MCF 10A (cell line): ENCODE measurements at regions of chr1 and their contacts with region 1.

Region 1: DNA sequence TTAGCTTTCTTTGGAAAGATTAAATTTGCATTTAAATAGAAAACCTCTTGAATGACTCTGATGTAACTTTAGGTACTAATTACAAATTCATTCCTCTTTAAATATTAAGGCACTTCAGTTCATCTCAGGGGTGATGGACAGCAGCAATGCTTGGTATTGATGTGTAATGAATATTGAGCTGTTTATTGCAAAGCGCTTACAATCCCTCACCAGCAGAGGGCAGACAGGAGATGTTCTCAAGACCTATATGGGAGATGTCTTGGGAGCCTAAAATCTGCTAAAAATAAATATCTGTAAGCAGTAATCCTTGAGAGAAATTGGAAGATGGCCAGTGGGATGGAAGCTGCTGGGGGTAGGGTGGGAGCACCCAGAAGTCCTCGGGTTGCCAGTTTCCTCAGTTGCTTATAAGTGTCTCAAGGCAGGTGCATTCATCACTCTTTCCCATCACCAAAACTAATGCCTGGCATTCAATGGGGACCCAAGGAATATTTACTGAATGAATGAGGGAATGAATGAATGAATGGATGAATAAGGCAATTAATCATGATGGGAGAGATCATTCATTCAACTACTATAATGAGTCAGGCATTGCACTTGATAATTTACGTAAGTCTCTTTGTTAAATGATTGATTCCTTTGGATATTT is 2.3 kb downstream of the KLHDC8A start:
- DNase-seq: peak; percentile 92
- H3K4me3 Mint-ChIP-seq: no peak overlapping the region
- H3K27ac Mint-ChIP-seq: no peak overlapping the region
- H3K4me1 Mint-ChIP-seq: peaks cover 13% of the 10 kb centered on the region
- H3K27me3 Mint-ChIP-seq: peaks cover 23% of the 10 kb centered on the region
- CTCF ChIP-seq: peak; percentile 91

Region 2: GRCh38 chr1:205227584-205228006 is 126.8 kb before region 1 on chr1 and contains the start of gene TMCC2:
- CTCF ChIA-PET with region 1: interaction called, 10 read pairs
- POLR2A ChIA-PET with region 1: interaction called, 3 read pairs
- intact Hi-C with region 1: no loop called
- DNase-seq: peak; percentile 91
- H3K4me3 Mint-ChIP-seq: peak within 1 kb of the TSS; percentile 63
- H3K27ac Mint-ChIP-seq: no peak within 1 kb of the TSS
- H3K4me1 Mint-ChIP-seq: peaks cover 20% of the 10 kb centered on the region
- H3K27me3 Mint-ChIP-seq: no peaks in the 10 kb centered on the region
- CTCF ChIP-seq: no peak
- total RNA-seq, gene TMCC2: 0.54 and 0.79 TPM in 2 replicates

Region 3: GRCh38 chr1:205335643-205336091 is 18.7 kb before region 1 on chr1:
- CTCF ChIA-PET with region 1: interaction called, 270 read pairs
- POLR2A ChIA-PET with region 1: interaction called, 5 read pairs
- intact Hi-C with region 1: loop called (anchors 1 kb)
- DNase-seq: peak; percentile 97
- H3K4me3 Mint-ChIP-seq: no peak overlapping the region
- H3K27ac Mint-ChIP-seq: no peak overlapping the region
- H3K4me1 Mint-ChIP-seq: peaks cover 4% of the 10 kb centered on the region
- H3K27me3 Mint-ChIP-seq: peaks cover 17% of the 10 kb centered on the region
- CTCF ChIP-seq: peak; percentile 100

Region 4: GRCh38 chr1:205391386-205391785 is 37.0 kb after region 1 on chr1:
- CTCF ChIA-PET with region 1: interaction called, 31 read pairs
- POLR2A ChIA-PET with region 1: interaction called, 4 read pairs
- intact Hi-C with region 1: no loop called
- DNase-seq: no peak
- H3K4me3 Mint-ChIP-seq: no peak overlapping the region
- H3K27ac Mint-ChIP-seq: no peak overlapping the region
- H3K4me1 Mint-ChIP-seq: no peaks in the 10 kb centered on the region
- H3K27me3 Mint-ChIP-seq: peaks cover 52% of the 10 kb centered on the region
- CTCF ChIP-seq: no peak

Region 5: GRCh38 chr1:205416322-205416721 is 61.9 kb after region 1 on chr1:
- CTCF ChIA-PET with region 1: interaction called, 13 read pairs
- POLR2A ChIA-PET with region 1: no interaction called
- intact Hi-C with region 1: no loop called
- DNase-seq: no peak
- H3K4me3 Mint-ChIP-seq: no peak overlapping the region
- H3K27ac Mint-ChIP-seq: no peak overlapping the region
- H3K4me1 Mint-ChIP-seq: no peaks in the 10 kb centered on the region
- H3K27me3 Mint-ChIP-seq: peaks cover 40% of the 10 kb centered on the region
- CTCF ChIP-seq: no peak

Region 6: GRCh38 chr1:205440476-205441317 is 86.3 kb after region 1 on chr1:
- CTCF ChIA-PET with region 1: interaction called, 14 read pairs
- POLR2A ChIA-PET with region 1: interaction called, 3 read pairs
- intact Hi-C with region 1: no loop called
- DNase-seq: peak; percentile 93
- H3K4me3 Mint-ChIP-seq: peak overlapping the region; percentile 1
- H3K27ac Mint-ChIP-seq: peak overlapping the region; percentile 77
- H3K4me1 Mint-ChIP-seq: peaks cover 25% of the 10 kb centered on the region
- H3K27me3 Mint-ChIP-seq: no peaks in the 10 kb centered on the region
- CTCF ChIP-seq: no peak

Region 7: DNA sequence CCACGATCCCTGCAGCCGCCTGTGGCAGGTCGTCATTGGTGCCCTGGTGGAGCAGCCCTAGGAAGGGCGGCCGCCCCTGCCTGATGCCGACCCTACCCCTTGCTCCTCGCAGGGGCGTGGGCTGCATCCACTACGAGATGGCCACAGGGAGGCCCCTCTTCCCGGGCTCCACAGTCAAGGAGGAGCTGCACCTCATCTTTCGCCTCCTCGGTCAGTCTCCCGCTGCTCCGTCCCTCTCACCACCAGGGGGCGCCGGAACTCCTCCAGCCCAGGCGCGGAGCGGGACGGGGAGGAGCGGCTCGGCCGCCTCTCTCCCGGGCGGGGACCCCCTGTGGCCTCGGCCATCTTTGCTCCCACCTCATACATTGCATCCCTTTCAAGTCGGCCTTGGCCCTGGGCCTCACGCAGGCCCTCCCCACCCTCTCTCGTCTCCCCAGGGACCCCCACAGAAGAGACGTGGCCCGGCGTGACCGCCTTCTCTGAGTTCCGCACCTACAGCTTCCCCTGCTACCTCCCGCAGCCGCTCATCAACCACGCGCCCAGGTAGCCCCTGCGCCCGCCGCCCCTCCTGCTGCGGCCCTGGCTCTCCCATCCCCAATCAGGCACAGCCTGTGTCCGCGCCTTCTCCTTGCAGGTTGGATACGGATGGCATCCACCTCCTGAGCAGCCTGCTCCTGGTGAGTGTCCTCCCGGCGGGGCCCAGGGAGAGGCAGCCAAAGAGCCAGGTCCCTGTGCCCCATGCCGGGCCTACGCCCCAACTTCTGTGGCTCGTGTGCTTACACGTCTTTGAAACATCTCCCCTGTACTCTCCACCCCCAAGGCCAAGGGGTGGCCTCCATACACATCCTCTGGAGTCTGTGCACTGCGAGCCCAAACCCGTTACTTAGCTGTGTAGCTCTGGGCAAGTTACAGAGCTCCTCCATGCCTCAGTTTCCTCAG is 174.8 kb after region 1 on chr1:
- CTCF ChIA-PET with region 1: interaction called, 130 read pairs
- POLR2A ChIA-PET with region 1: interaction called, 4 read pairs
- intact Hi-C with region 1: loop called (anchors 1 kb)
- DNase-seq: peak; percentile 89
- H3K4me3 Mint-ChIP-seq: peak overlapping the region; percentile 32
- H3K27ac Mint-ChIP-seq: no peak overlapping the region
- H3K4me1 Mint-ChIP-seq: peaks cover 6% of the 10 kb centered on the region
- H3K27me3 Mint-ChIP-seq: no peaks in the 10 kb centered on the region
- CTCF ChIP-seq: peak; percentile 100